Uterus (tissue), 4 donors: ENCODE measurements at regions of chr22 and their contacts with region 1.

Region 1: DNA sequence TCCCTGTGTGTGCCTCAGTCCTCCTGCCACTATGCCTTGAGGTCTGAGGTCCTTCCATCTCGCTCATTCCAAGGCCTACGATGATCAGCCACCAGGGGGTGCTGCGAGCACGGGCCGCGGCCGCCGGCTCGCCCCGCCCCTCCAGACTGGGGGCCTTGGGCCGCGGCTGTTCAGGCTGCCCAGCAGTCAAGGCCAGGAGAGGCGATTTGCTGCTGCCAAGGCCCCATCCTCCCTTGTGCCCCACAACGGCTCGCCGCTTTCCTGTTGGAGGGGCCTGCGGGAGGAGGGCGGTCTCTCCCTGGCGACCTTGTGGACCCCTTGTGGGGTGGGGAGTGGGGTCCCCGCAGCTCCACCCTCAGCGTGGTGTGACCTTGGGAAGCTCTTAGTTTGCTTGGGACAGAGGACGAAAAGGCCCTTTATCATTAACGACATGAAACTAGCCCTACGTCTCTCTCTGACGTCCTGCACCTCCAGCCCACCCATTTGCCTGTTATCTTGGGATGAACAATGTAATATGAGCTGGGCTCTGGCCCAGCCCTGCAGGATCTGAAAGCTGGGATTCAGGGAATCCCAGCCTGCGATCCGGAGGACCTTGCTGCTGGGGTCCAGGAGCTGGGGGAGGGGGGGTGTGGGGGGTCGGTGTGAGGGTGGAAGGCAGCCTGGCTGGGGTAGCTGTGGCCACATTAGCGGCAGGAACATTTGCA is 5.3 kb upstream of the GALR3 start:
- DNase-seq: peak; percentile 79 to 89
- H3K4me3 ChIP-seq: peak overlapping the region; percentile 20 to 41
- H3K27ac ChIP-seq: peak overlapping the region; percentile 32 to 57
- H3K4me1 ChIP-seq: peaks cover 0 to 13% of the 10 kb centered on the region in 2 donors
- H3K27me3 ChIP-seq: peaks cover 0 to 12% of the 10 kb centered on the region in 2 donors
- CTCF ChIP-seq: peak; percentile 98 to 99 (median 98)
- POLR2A ChIP-seq: peak in 1 of 2 donors; percentile 26

Region 2: GRCh38 chr22:37658133-37659065 is 159.5 kb before region 1 on chr22 and contains the start of gene PDXP:
- intact Hi-C with region 1: no loop called
- DNase-seq: peak; percentile 100
- H3K4me3 ChIP-seq: peak within 1 kb of the TSS; percentile 51 to 68
- H3K27ac ChIP-seq: peak within 1 kb of the TSS; percentile 81
- H3K4me1 ChIP-seq: peaks cover 0 to 11% of the 10 kb centered on the region in 2 donors
- H3K27me3 ChIP-seq: no peaks in the 10 kb centered on the region
- CTCF ChIP-seq: peak in 2 of 4 experiments; percentile 13 to 22
- POLR2A ChIP-seq: peak; percentile 85 to 92
- total RNA-seq, gene PDXP: 0.88 to 10.7 (median 3.7) TPM

Region 3: DNA sequence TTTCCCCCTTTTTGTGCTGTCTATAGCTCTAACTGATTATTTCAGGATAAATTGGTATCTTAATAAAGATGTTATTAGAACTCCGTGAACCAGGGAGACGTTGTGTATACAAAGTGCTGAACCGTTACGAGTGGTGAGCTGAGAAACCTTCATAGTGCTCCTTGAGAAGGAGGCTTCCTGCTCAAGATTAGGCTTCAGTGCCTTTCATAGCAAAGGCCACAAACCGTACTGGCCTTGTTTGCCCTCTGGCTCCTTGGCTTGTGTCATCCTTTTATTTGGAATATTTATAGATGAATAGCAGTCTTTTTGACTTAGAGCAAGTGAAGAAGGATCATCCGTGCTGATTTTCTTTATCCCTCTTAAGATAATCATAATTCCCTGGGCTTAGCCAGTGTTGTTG is 47.7 kb after region 1 on chr22:
- intact Hi-C with region 1: loop called (anchors 2 kb)
- DNase-seq: no peak
- H3K4me3 ChIP-seq: no peak overlapping the region
- H3K27ac ChIP-seq: no peak overlapping the region
- H3K4me1 ChIP-seq: no peaks in the 10 kb centered on the region
- H3K27me3 ChIP-seq: no peaks in the 10 kb centered on the region
- CTCF ChIP-seq: no peak
- POLR2A ChIP-seq: no peak

Region 4: DNA sequence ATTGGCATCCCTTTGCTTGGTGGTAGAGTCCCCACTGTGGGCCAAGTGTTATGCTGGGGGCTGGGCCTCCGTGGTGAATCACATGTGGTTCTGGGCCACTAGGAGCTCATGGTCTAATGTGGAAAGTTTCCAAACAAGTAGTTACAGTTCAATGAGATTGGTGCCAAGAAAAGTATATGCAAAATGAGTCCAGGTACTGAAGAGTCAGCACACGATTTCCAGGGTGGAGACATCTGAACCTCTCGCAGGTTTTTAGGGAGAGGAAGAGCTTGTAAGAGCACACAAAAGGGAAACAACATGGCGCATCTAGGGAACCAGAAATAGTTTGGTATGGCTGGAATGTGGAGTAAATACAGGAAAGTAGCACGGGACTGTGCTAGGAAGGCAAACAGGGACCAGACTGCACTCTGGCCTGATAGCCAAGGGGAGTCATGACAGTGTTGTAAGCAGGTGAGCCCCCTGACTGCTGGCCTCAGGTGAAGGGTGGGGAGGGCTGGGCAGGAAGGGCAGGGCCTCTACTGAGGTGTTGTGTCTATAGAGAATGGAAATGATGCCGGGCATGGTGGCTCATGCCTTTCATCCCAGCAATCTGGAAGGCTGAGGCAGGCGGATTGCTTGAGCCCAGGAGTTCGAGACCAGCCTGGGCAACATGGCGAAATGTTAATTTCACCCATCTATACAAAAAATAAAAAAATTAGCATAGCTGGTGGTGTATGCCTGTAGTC is 148.2 kb after region 1 on chr22:
- intact Hi-C with region 1: loop called (anchors 5 kb)
- DNase-seq: no peak
- H3K4me3 ChIP-seq: no peak overlapping the region
- H3K27ac ChIP-seq: no peak overlapping the region
- H3K4me1 ChIP-seq: no peaks in the 10 kb centered on the region
- H3K27me3 ChIP-seq: no peaks in the 10 kb centered on the region
- CTCF ChIP-seq: no peak
- POLR2A ChIP-seq: no peak